HEK293T (cell line): ENCODE measurements at regions of chr12 and their contacts with region 1.

Region 1: DNA sequence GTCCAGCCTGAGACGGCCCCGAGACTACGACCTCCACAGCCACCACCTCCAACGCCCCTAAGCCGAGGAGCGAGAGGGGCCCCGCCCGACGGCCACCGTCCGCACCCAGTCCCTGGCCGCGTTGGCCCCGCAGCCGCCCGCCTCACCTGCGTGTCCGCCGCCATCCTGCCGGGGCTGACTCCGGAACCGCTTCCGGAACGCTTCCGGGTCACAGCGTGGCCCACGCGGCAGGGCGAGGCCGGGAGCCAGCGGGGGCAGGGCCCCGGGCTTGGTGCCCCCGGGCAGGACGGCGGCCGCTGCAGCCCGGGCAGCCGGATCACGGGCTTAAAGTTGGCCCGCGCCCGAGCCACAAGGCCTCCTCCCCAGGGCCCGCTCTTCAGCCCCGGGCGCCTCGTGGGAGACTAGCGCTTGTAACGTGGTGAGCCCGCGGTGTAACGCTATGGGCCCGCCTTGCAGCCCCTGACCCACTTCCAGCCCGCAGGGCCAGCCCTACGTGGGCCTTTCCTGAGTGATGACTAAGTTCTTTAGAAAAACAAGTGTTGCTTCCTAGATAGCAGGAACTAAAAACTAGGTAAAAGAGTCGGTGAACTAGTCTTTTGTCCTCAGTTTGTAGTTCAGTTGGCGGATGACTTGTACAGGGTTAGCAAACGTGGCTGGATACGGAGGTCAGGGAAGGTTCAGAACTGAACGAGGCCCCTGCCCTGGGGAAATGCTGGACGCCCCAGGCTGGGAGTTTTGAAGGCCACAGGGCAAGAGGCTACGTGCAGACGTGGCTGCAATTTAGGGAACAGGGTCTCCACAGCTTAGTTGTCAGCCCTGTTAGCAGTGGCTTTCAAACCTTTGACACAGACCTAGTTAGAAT is at the start of gene GCN1:
- DNase-seq: peak; percentile 80

Region 2: GRCh38 chr12:120064054-120064940 is 130.5 kb before region 1 on chr12:
- CTCF ChIA-PET with region 1: no interaction called
- POLR2A ChIA-PET with region 1: no interaction called
- DNase-seq: no peak

Region 3: DNA sequence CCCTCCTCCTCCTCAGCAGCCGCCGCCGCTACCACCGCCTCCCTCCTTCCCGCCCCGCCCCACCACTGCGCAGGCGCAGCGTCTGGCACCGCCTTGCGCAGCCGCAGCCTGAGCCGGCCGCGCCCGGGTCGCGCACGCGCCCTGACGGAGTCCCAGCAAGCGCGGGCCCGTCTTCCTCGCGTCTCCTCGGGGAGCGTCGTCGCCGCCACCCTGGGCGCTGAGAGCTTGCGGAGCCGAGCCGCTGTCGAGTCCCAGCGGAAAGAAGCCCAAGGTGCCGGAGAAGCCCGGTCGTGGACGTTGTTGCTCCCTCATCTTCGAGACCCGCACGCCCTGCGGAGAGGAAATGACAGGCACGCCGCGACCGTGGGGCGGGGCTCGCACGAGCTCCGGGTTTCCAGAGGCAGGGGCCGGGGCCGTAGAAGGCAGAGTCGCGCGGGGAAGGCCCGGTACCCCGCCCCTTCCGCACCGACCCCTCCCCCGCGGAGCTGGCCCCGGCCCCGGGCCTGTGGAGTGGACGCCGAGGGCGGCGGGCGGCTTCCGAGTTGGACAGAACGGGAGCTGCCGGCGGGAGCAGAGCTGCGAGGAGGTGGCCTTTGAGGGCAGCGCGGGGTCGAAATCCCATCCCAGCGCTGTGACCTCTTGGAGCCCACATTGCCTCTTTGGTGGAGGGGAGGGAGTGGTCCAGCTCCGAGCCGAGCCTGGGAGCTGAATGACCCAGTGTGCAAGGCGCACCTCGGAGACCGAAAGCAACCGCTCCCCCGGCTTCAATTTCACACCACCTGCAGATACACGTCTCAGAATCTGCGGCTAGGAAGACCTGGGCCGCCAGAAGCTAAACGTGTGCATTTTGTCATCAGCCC is 77.7 kb before region 1 on chr12:
- CTCF ChIA-PET with region 1: no interaction called
- POLR2A ChIA-PET with region 1: interaction called, 42 read pairs
- DNase-seq: peak; percentile 98

Region 4: GRCh38 chr12:120181991-120182631 is 12.7 kb before region 1 on chr12:
- CTCF ChIA-PET with region 1: interaction called, 3 read pairs
- POLR2A ChIA-PET with region 1: interaction called, 58 read pairs
- DNase-seq: no peak

Region 5: GRCh38 chr12:120209851-120210250 is 15.1 kb after region 1 on chr12:
- CTCF ChIA-PET with region 1: no interaction called
- POLR2A ChIA-PET with region 1: interaction called, 40 read pairs
- DNase-seq: no peak

Region 6: DNA sequence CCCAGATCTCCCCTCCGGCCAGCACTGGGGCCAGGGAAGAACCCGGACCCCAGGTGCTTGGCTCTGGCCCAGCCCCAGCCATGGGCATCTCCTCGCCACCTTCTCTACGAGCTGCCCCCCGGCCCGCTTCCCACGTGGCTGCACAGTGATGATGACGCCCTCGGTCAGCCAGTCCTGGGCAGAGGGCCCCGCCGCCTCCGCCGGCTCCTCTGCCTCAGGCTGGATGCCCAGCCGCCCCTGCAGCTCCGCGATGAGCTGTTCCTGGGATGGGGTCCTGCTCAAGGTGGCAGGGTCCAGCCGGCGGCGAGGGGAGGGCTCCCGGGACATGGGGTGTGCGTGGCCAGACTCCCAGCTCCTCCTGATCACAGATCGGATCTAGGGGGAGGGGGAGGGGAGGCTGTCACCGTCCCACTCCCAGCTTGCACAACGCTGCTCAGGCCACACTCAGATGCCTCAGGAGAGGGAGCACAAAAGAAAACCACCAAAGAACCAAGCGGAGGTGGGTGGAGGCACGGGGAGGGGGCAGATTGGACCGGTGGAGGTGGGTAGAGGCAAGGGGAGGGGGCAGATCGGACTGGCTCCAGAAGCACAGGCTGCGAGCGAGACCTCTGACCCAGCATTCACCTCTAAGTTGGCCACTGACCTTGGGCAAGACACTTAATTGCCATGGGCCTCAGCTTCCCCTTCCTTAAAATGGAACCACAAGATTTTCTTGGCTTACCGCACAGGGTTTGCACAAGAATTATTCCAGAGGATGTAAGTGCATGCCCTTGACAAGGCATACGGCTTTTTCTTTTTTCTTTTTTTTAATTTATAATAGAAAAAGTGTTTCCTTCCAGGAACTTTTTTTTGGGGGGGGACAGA is 22.2 kb after region 1 on chr12:
- CTCF ChIA-PET with region 1: no interaction called
- POLR2A ChIA-PET with region 1: interaction called, 48 read pairs
- DNase-seq: no peak

Region 7: GRCh38 chr12:120265473-120266179 is 70.9 kb after region 1 on chr12 and contains the start of gene PXN:
- CTCF ChIA-PET with region 1: no interaction called
- POLR2A ChIA-PET with region 1: interaction called, 72 read pairs
- DNase-seq: peak; percentile 97